ENCODE measurements at regions of chr10 and their contacts with region 1.

Region 1: DNA sequence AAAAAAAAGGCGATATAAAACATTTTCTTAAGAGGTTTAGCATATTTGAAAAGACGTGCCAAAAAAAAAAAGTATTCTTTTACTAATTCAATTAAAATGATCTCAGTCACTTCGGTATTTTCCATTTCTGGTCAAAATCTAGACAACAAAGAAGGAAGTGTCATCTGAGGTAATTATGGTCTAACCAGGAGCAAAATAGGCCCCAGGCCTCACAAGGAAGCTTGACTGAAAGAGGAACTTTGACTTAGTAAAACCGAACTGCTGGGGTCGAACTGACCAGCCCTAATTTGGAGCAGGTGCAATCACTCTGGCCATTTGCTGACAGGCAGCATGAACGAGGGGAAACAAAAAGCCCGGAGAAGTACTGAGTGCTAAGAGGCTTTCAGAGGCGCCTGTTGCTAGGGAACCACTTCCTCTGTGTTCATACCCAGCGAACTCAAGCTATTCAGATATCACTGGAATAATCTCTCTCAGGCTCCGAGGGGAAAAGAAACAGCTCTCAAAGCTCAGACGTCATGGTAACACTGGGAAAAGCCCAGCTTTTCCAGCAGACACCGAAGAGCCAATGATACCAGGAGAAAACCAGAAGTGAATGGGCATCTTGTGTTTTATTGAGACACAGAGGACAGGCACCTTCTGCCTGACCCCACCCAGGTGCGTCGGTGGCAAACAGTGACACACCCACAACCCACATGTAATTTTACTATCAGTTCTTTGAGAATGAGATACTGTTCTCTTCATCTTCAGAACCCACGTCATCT is 126.5 kb downstream of the FAM107B start:
- DNase-seq: peak; percentile 56
- ATAC-seq: peak; percentile 79
- H3K4me3 Mint-ChIP-seq: peak overlapping the region; percentile 75
- H3K27ac Mint-ChIP-seq: peak overlapping the region; percentile 98
- H3K4me1 Mint-ChIP-seq: peaks cover 80% of the 10 kb centered on the region
- H3K27me3 Mint-ChIP-seq: no peaks in the 10 kb centered on the region
- CTCF ChIP-seq: no peak

Region 2: GRCh38 chr10:14349081-14349480 is 299.1 kb before region 1 on chr10:
- CTCF ChIA-PET with region 1: no interaction called
- POLR2A ChIA-PET with region 1: no interaction called
- intact Hi-C with region 1: no loop called
- DNase-seq: no peak
- ATAC-seq: no peak
- H3K4me3 Mint-ChIP-seq: no peak overlapping the region
- H3K27ac Mint-ChIP-seq: no peak overlapping the region
- H3K4me1 Mint-ChIP-seq: no peaks in the 10 kb centered on the region
- H3K27me3 Mint-ChIP-seq: peaks cover 19% of the 10 kb centered on the region
- CTCF ChIP-seq: no peak

Region 3: GRCh38 chr10:14500172-14500765 is 147.9 kb before region 1 on chr10:
- CTCF ChIA-PET with region 1: no interaction called
- POLR2A ChIA-PET with region 1: no interaction called
- intact Hi-C with region 1: loop called (anchors 5 kb)
- DNase-seq: no peak
- ATAC-seq: no peak
- H3K4me3 Mint-ChIP-seq: no peak overlapping the region
- H3K27ac Mint-ChIP-seq: no peak overlapping the region
- H3K4me1 Mint-ChIP-seq: peaks cover 18% of the 10 kb centered on the region
- H3K27me3 Mint-ChIP-seq: no peaks in the 10 kb centered on the region
- CTCF ChIP-seq: no peak

Region 4: DNA sequence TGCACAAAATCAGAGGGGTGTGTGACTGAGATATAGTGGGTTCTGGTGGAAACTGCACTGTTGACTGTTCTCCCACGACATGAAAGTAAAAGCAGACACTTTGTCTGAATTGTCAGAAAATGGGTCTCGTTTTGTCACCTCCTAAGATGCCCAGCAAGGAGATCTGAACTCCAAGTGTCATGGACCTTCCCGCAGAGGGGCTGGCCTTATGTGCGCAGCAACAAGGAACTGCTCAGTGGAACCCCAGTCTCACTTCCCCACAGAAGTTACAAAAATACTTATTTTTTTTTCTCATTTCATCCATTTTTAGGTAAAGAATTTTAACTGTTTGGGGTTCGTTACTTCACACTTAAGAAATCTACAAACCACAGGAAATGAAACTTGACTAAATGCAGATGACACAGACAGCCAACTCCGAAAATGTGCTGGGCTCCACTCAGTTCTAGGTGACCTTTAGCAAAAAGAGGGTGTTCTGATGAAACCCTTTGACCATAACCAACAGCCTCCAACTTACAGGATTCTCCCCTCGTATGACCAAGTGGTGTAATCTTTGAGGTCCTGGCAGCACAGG is 11.5 kb after region 1 on chr10:
- CTCF ChIA-PET with region 1: no interaction called
- POLR2A ChIA-PET with region 1: interaction called, 15 read pairs
- intact Hi-C with region 1: loop called (anchors 1 kb)
- DNase-seq: no peak
- ATAC-seq: peak; percentile 68
- H3K4me3 Mint-ChIP-seq: peak overlapping the region; percentile 78
- H3K27ac Mint-ChIP-seq: peak overlapping the region; percentile 94
- H3K4me1 Mint-ChIP-seq: peaks cover 85% of the 10 kb centered on the region
- H3K27me3 Mint-ChIP-seq: no peaks in the 10 kb centered on the region
- CTCF ChIP-seq: no peak

Region 5: DNA sequence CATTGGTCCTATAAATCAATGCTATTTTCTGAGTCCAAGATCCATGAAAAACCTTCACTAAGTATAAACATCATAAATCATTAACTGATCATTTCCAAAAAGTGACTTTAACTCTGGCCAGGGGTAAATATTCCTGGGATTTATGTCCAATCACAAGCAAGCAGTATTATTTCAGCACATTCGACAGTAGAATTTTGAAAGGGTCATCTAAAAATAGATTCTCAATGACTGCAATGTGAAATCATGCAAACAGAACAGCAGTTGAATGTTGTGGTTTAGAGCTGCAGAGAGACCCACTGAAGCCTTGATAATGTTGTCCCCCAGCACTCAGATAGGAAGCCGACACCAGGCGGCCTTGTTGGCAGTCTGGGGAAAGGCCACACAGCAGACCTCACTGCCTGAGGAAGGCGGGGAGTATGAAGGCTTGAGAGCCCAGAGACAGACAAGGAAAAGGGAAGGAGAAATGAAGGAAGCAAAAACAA is 88.5 kb after region 1 on chr10:
- CTCF ChIA-PET with region 1: no interaction called
- POLR2A ChIA-PET with region 1: interaction called, 11 read pairs
- intact Hi-C with region 1: loop called (anchors 2 kb)
- DNase-seq: no peak
- ATAC-seq: peak; percentile 76
- H3K4me3 Mint-ChIP-seq: peak overlapping the region; percentile 73
- H3K27ac Mint-ChIP-seq: peak overlapping the region; percentile 98
- H3K4me1 Mint-ChIP-seq: peaks cover 76% of the 10 kb centered on the region
- H3K27me3 Mint-ChIP-seq: no peaks in the 10 kb centered on the region
- CTCF ChIP-seq: no peak

Region 6: DNA sequence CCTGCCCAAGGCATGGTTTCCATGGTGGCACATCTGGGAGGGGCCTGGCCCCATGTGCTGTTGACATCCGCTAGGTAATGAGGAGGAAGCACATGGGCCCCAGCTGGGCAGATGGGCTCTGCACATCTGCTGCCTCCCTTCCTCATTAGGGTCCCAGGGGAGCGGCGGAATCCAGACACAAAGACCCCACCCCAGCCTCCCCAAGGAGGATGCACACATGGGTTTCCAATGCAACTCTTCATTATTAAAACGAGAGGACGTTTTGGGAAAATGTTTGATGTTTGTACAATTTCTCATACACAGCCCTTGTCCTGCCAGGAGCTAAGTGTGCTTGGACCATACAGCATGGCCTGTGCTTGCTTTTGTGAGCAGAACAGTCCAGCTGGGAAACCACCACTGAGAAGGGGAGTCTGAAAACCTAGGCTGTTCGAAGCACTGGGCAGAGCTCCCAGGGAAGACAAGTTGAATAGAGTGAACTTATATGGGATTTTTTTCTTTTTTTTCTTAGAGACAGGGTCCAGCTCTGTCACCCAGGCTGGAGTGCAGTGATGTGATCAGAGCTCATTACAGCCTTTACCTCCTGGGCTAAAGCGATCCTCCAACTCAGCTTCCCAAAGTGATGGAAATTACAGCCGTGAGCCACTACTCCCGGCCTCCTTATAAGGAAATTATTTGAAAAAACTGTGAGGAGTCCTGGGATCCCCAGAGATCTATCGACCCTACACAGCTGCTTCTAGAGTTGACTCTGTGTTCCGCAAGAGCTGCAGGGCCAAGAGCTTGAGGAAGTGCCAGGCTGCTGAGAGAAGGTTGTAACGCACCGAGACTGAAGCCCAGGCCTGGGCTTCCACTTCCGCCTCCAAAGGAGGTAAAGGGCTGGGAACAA is 103.1 kb after region 1 on chr10:
- CTCF ChIA-PET with region 1: no interaction called
- POLR2A ChIA-PET with region 1: interaction called, 8 read pairs
- intact Hi-C with region 1: loop called (anchors 1 kb)
- DNase-seq: peak; percentile 60
- ATAC-seq: peak; percentile 78
- H3K4me3 Mint-ChIP-seq: peak overlapping the region; percentile 70
- H3K27ac Mint-ChIP-seq: peak overlapping the region; percentile 97
- H3K4me1 Mint-ChIP-seq: peaks cover 71% of the 10 kb centered on the region
- H3K27me3 Mint-ChIP-seq: no peaks in the 10 kb centered on the region
- CTCF ChIP-seq: no peak

Region 7: GRCh38 chr10:14954001-14954770 is 306.0 kb after region 1 on chr10 and contains the start of gene DCLRE1C:
- CTCF ChIA-PET with region 1: no interaction called
- POLR2A ChIA-PET with region 1: interaction called, 3 read pairs
- intact Hi-C with region 1: loop called (anchors 5 kb)
- DNase-seq: peak; percentile 77
- ATAC-seq: peak; percentile 78
- H3K4me3 Mint-ChIP-seq: peak within 1 kb of the TSS; percentile 90
- H3K27ac Mint-ChIP-seq: peak within 1 kb of the TSS; percentile 96
- H3K4me1 Mint-ChIP-seq: peaks cover 56% of the 10 kb centered on the region
- H3K27me3 Mint-ChIP-seq: no peaks in the 10 kb centered on the region
- CTCF ChIP-seq: no peak
- total RNA-seq, gene DCLRE1C: 38.0 and 43.8 TPM in 2 replicates

Region 8: DNA sequence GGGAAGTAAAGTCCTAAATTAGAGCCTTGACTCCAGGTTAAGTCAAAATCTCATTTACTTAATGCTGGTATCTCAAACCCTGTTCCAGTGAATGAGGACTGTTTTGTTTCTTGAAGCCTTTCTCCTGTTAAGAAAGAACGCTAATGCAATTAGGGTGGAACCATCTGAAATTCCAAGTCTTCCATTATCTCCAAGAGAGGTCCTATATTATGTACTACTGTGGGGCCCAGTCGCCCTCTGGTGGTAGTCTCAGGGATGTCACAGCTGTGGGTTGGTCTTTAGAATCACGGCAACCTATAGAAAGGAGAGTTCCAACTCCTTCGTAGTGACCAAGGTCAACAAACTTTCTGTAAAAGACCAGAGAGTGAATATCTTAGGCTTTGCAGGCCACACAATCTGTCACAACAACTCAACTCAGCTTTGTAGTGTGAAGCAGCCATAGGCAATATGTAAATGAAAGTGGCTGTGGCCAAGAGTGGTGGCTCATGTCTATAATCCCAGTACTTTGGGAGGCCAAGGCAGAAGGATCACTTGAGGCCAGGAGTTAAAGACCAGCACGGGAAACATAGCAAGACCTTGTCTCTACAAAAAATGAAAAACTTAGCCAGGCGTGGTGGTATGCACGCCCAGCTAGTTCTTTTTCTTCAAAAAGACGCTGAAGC is 458.3 kb after region 1 on chr10:
- CTCF ChIA-PET with region 1: no interaction called
- POLR2A ChIA-PET with region 1: no interaction called
- intact Hi-C with region 1: no loop called
- DNase-seq: peak; percentile 32
- ATAC-seq: peak; percentile 96
- H3K4me3 Mint-ChIP-seq: no peak overlapping the region
- H3K27ac Mint-ChIP-seq: no peak overlapping the region
- H3K4me1 Mint-ChIP-seq: peaks cover 8% of the 10 kb centered on the region
- H3K27me3 Mint-ChIP-seq: no peaks in the 10 kb centered on the region
- CTCF ChIP-seq: peak; percentile 51

Region 9: DNA sequence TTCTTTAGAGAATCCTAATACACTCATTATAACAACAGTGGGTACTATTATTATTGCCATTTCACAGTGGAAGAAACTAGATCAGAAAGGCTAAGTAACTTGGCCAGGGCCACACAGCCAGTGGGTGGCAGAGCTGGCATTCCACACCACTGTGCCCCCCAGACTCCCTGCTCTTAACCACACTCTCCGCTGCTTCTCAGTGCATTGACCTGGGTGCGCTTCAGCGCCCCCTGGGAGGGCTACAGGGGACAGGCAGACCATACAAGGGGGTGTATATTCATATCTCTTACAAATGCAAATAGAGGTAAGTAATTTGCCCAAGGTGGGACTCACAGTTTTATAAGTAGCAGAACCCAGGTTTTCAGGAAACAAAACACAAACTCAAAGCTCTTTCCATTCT is 597.3 kb after region 1 on chr10:
- CTCF ChIA-PET with region 1: no interaction called
- POLR2A ChIA-PET with region 1: no interaction called
- intact Hi-C with region 1: no loop called
- DNase-seq: no peak
- ATAC-seq: no peak
- H3K4me3 Mint-ChIP-seq: no peak overlapping the region
- H3K27ac Mint-ChIP-seq: no peak overlapping the region
- H3K4me1 Mint-ChIP-seq: no peaks in the 10 kb centered on the region
- H3K27me3 Mint-ChIP-seq: peaks cover 3% of the 10 kb centered on the region
- CTCF ChIP-seq: no peak

Measured in activated B cell treated with CpG ODN at 0.5 μM for 24 hours (primary cell).